ENCODE measurements at regions of chr5 and their contacts with region 1.

Region 1: DNA sequence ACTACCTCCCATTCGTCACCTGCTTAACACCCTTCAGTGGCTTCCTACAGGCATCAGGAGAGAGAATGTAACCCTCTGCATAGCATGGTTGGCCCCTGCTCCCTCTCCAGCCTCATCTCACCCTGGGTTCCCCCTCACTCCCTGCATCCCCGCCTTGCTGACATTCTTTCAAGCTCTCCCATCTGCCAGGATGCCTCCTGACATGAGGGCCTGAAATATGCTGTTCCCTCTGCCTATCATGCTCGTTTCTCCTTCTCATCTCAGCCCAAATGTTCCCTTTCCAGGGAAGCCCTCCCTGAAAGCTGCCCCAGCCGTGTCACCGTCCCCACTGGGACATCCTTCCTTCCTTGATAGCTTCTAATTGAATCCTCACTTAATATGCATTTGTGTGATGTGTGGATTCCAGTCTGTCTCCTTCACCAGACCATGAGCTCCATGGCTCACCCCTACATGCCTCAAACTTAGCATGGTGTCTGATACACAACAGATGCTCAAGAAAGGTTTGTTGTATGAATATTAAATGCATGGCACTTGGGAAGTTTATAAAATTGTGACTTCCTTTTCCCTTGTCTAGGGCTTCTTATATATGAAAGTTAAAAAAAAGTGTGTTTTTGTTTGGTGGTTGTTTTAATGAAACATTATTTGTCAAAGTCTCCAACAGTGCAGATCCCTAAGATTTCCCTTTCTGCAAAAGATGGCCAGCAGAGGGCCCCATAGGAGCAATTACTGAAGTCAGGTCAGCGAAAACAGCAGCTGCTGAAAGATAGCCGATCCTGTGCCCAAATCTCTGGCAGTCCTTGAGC is 7.3 kb upstream of the C5orf58 start:
- DNase-seq: peak; percentile 86
- ATAC-seq: peak; percentile 77
- H3K4me3 Mint-ChIP-seq: no peak overlapping the region
- H3K27ac Mint-ChIP-seq: no peak overlapping the region
- H3K4me1 Mint-ChIP-seq: peaks cover 3% of the 10 kb centered on the region
- H3K27me3 Mint-ChIP-seq: no peaks in the 10 kb centered on the region

Region 2: DNA sequence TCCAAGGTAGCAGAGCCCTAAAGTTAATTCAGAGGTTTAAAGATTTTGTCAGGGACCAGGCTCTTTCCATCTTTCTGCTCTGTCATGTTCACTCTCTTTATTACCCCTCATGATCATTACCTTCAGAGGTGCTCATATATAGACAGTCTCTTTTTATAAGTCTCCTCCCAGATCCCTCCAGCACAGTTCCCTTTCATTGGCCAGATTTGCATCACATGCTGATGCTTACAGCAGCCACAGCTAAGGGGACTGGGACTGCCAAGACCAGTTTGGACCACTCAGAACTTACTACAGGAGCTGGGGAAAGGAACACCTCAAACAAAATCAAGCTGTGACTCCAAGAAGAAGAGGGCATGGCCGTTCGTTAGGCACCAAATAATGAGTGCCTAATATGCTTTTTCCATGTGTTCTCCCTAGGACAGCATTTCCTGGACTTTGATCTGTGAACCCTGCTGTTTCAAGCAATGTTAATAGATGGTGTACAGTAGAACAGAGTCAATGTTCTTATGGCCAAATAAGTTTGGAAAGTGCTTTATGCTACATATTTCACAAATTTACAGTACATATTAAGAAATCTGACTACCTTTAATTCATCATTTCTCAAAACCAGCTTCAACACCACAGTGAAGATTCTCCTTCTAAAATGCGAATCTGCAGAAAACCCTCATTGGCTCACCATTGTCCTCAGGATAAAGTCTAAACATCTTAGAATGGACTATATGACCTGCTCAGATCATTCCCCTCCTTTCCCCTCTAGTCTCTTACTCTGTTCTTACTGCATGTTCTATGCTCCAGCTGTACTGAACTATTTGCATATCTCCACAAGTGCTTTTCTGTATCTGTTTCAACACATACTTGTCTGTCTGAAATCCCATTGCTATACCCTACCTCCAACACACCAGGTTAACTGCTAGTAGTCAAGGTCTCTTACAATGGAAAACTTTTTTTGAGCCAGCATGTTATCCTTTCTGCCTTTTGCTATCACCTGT is 10.6 kb after region 1 on chr5:
- CTCF ChIA-PET with region 1: interaction called, 47 read pairs
- DNase-seq: no peak
- ATAC-seq: no peak
- H3K4me3 Mint-ChIP-seq: no peak overlapping the region
- H3K27ac Mint-ChIP-seq: no peak overlapping the region
- H3K4me1 Mint-ChIP-seq: no peaks in the 10 kb centered on the region
- H3K27me3 Mint-ChIP-seq: no peaks in the 10 kb centered on the region

Region 3: DNA sequence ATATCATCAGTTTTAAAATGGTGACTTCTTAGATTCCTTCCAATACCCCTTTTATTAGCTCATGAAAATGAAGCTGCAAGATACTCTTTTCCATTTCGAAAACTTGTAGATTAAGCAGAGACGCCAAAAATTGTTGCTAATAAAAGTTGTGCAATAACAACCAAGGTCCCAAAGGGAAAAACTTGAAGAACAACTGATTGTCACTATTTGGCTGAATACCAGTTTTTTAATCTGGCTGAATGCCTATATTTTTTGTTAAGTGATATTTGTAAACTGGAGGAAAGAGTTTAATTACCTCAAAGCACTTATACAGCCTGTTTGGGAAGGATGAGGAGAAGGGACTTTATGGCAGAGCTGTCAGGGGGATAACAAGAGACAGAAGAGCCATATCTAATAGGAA is 21.8 kb after region 1 on chr5:
- CTCF ChIA-PET with region 1: interaction called, 11 read pairs
- DNase-seq: no peak
- ATAC-seq: no peak
- H3K4me3 Mint-ChIP-seq: no peak overlapping the region
- H3K27ac Mint-ChIP-seq: no peak overlapping the region
- H3K4me1 Mint-ChIP-seq: peaks cover 29% of the 10 kb centered on the region
- H3K27me3 Mint-ChIP-seq: no peaks in the 10 kb centered on the region

Region 4: GRCh38 chr5:170262061-170263045 is 36.8 kb after region 1 on chr5:
- CTCF ChIA-PET with region 1: interaction called, 29 read pairs
- DNase-seq: peak; percentile 84
- ATAC-seq: peak; percentile 56
- H3K4me3 Mint-ChIP-seq: peak overlapping the region; percentile 38
- H3K27ac Mint-ChIP-seq: peak overlapping the region; percentile 89
- H3K4me1 Mint-ChIP-seq: peaks cover 93% of the 10 kb centered on the region
- H3K27me3 Mint-ChIP-seq: no peaks in the 10 kb centered on the region

Region 5: GRCh38 chr5:170293273-170293672 is 67.7 kb after region 1 on chr5:
- CTCF ChIA-PET with region 1: interaction called, 11 read pairs
- DNase-seq: peak; percentile 95
- ATAC-seq: peak; percentile 62
- H3K4me3 Mint-ChIP-seq: peak overlapping the region; percentile 95
- H3K27ac Mint-ChIP-seq: peak overlapping the region; percentile 95
- H3K4me1 Mint-ChIP-seq: peaks cover 63% of the 10 kb centered on the region
- H3K27me3 Mint-ChIP-seq: no peaks in the 10 kb centered on the region

Region 6: DNA sequence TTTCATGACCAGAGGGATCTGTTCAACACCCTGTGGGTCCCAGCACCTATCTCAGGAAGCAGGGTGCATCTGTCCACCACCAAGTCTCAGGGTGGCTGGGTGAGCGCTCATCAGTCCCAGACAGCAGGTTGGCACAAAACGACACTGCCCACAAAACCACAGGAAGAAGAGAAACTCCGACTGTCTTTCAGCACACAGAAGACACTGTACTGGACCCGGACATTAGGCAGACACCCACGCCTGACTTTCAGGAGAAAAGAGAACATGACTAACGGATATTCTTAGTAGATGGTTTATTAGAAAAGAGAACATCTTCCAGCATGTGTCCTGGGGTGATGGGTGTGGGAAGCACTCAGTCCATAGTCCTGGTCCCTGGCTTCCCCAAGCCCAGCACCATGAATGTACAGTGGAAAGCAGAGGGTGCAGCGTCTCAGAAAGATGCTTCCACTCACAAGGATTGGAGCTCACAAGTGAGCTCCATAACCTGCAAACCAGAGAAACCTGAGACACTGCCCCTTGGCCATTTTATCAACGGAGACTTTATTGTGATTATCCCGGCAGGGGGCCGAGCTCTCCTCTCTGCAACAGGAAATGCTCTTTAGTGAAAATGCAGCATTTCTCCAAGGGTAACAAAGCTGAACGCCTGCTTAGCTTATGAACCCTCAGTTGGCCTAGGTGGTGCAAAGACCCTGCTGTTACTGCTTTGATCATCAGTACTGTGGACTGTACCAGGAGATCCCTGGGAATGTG is 107.8 kb after region 1 on chr5:
- CTCF ChIA-PET with region 1: interaction called, 205 read pairs
- DNase-seq: peak; percentile 86
- ATAC-seq: peak; percentile 46
- H3K4me3 Mint-ChIP-seq: peak overlapping the region; percentile 66
- H3K27ac Mint-ChIP-seq: no peak overlapping the region
- H3K4me1 Mint-ChIP-seq: peaks cover 27% of the 10 kb centered on the region
- H3K27me3 Mint-ChIP-seq: no peaks in the 10 kb centered on the region

Region 7: GRCh38 chr5:170420780-170421412 is 195.4 kb after region 1 on chr5:
- CTCF ChIA-PET with region 1: interaction called, 38 read pairs
- DNase-seq: peak; percentile 66
- ATAC-seq: peak; percentile 61
- H3K4me3 Mint-ChIP-seq: no peak overlapping the region
- H3K27ac Mint-ChIP-seq: no peak overlapping the region
- H3K4me1 Mint-ChIP-seq: peaks cover 6% of the 10 kb centered on the region
- H3K27me3 Mint-ChIP-seq: peaks cover 20% of the 10 kb centered on the region

Region 8: DNA sequence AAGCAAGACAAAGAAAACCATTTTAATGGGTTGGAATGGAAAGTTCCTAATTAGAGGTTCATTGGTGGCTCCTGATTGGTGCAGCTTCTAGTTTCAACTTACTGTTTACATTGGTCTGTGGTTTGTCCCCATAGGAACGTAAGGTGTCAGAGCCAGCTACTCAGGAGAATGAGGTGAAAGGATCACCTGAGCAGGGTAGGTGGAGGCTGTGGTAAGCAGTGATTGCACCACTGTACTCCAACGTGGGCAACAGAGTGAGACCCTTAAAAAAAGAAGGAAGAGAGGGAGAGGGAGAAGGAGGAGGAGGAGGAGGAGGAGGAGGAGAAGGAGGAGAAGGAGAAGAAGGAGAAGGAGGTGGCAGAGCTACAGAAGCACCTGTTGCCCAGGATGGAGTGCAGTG is 308.6 kb after region 1 on chr5:
- CTCF ChIA-PET with region 1: no interaction called
- DNase-seq: no peak
- ATAC-seq: no peak
- H3K4me3 Mint-ChIP-seq: no peak overlapping the region
- H3K27ac Mint-ChIP-seq: no peak overlapping the region
- H3K4me1 Mint-ChIP-seq: no peaks in the 10 kb centered on the region
- H3K27me3 Mint-ChIP-seq: peaks cover 24% of the 10 kb centered on the region

Region 9: GRCh38 chr5:170638454-170639220 is 413.1 kb after region 1 on chr5:
- CTCF ChIA-PET with region 1: no interaction called
- DNase-seq: peak; percentile 76
- ATAC-seq: peak; percentile 72
- H3K4me3 Mint-ChIP-seq: no peak overlapping the region
- H3K27ac Mint-ChIP-seq: no peak overlapping the region
- H3K4me1 Mint-ChIP-seq: peaks cover 2% of the 10 kb centered on the region
- H3K27me3 Mint-ChIP-seq: peaks cover 12% of the 10 kb centered on the region